ENCODE measurements at regions of chr13 and their contacts with region 1.

Region 1: DNA sequence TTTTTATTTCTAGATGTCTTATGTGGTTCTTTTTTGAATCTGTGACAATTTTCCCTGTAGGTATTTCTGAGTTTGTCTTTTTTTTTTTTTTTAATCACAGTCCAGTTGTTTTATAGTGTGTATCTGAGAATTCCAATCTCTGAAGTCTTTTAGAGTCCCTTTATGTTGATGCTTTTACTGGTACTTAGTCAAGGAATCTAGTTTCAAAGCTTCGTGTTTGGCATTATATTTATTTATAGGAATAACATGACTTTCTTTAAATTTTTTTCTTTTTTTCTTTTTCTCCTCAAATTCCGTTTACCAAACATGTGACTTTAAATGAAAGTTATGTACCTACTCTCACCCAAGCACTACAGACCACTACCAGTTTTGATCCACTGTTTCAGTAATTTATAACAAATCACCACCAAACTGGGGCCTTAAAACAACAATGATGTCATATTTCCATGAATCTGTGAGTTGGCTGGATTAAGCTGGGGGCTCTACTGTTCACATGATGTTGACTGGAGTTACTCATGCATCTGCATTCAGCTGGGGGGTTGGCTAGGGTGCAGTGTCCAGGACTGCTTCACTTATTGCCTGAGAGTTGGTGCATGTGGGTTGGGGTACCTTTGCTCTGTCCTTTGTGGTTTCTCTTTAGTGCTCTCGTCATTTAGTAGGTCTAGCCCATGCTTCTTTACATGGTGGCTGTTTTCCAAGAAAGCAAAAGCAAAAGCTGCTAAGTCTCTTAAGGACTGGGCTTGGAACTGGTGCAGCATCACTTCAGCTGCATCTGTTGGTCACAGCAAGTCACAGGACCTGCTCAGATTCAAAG is 22.3 kb downstream of the KCTD4 start:
- DNase-seq: no peak
- ATAC-seq: no peak
- H3K4me3 ChIP-seq: no peak overlapping the region
- H3K4me3 Mint-ChIP-seq: no peak overlapping the region
- H3K27ac ChIP-seq: no peak overlapping the region
- H3K27ac Mint-ChIP-seq: no peak overlapping the region
- H3K4me1 ChIP-seq: peaks cover 0 to 2% of the 10 kb centered on the region in 2 experiments
- H3K4me1 Mint-ChIP-seq: peaks cover 32 to 36% (median 34%) of the 10 kb centered on the region in 3 donors
- H3K27me3 ChIP-seq: no peaks in the 10 kb centered on the region
- H3K27me3 Mint-ChIP-seq: no peaks in the 10 kb centered on the region

Region 2: GRCh38 chr13:45249662-45250061 is 71.1 kb after region 1 on chr13:
- CTCF ChIA-PET with region 1: no interaction called
- POLR2A ChIA-PET with region 1: interaction called in 1 of 2 experiments, 12 read pairs
- DNase-seq: no peak
- ATAC-seq: no peak
- H3K4me3 ChIP-seq: no peak overlapping the region
- H3K4me3 Mint-ChIP-seq: no peak overlapping the region
- H3K27ac ChIP-seq: no peak overlapping the region
- H3K27ac Mint-ChIP-seq: no peak overlapping the region
- H3K4me1 ChIP-seq: no peaks in the 10 kb centered on the region
- H3K4me1 Mint-ChIP-seq: peaks cover 0 to 5% (median 4%) of the 10 kb centered on the region in 3 donors
- H3K27me3 ChIP-seq: no peaks in the 10 kb centered on the region
- H3K27me3 Mint-ChIP-seq: no peaks in the 10 kb centered on the region